GM10248 (cell line): ENCODE measurements at regions of chr1 and their contacts with region 1.

Region 1: GRCh38 chr1:35451125-35451528 is 106.1 kb downstream of the KIAA0319L start:
- DNase-seq: peak; percentile 70
- CTCF ChIP-seq: peak; percentile 92

Region 2: GRCh38 chr1:35369922-35370671 is 81.0 kb before region 1 on chr1:
- CTCF ChIA-PET with region 1: no interaction called
- POLR2A ChIA-PET with region 1: no interaction called
- DNase-seq: peak; percentile 19
- CTCF ChIP-seq: no peak

Region 3: GRCh38 chr1:35461966-35462651 is 11.0 kb after region 1 on chr1:
- CTCF ChIA-PET with region 1: interaction called, 25 read pairs
- POLR2A ChIA-PET with region 1: no interaction called
- DNase-seq: peak; percentile 32
- CTCF ChIP-seq: no peak

Region 4: GRCh38 chr1:35539073-35539823 is 88.1 kb after region 1 on chr1:
- CTCF ChIA-PET with region 1: interaction called, 72 read pairs
- POLR2A ChIA-PET with region 1: no interaction called
- DNase-seq: no peak
- CTCF ChIP-seq: no peak

Region 5: GRCh38 chr1:35557292-35558063 is 106.4 kb after region 1 on chr1 and contains the starts of genes KIAA0319L and NCDN:
- CTCF ChIA-PET with region 1: interaction called, 34 read pairs
- POLR2A ChIA-PET with region 1: interaction called, 3 read pairs
- DNase-seq: peak; percentile 97
- CTCF ChIP-seq: no peak

Region 6: DNA sequence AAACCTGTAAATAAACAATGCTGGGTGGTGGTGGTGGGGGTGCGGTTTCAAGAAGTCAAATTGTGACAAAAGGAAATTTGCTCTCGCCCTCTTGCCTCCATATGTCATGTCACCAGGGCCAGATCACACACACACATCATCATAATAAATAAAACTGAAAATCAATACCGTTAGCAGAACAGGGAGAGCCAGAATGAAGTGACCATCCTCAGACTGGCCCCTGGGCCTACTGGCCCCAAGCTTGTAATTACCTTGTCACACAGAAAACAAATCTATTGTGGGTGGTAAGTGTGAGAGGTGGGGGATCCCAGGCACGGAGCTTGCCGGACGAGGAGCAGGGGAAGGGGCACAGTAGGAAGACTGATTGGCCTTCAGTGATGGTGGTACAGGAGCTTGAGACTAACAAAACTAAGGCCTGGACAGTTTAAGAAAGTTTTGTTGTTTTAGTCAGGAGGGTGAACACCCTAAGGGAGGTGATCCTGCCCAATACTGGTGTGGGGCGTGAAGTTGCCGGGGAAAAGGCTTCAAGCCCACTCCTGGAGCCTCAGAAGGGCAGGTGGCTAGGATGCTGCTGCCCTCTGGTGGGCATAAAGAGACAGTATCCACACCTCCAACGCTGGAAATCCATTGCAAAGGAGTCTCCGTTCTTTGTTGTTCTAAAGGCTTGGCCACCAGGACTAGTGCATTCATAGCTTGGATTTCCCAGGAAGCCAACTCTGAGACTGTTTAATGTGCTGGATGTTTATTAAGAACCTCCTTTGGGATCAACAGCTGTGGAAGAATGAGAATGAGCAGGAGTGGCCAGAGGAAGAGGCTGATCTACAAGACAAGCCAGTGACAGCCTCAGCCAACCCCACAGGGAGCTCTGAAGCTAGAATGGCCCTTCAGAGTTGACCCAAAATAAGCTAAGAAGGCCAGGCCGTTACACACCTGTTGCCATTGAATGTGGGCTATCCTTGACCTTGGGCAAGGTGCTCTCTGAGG is 275.6 kb after region 1 on chr1:
- CTCF ChIA-PET with region 1: interaction called, 17 read pairs
- POLR2A ChIA-PET with region 1: no interaction called
- DNase-seq: peak; percentile 63
- CTCF ChIP-seq: peak; percentile 83